Activated CD8-positive, alpha-beta memory T cell treated with anti-CD3 and anti-CD28 coated beads, Interleukin-2, amount 10 ng/mL, durations not matched to agents 7 days and 5 days (primary cell): ENCODE measurements at regions of chr5 and their contacts with region 1.

Region 1: DNA sequence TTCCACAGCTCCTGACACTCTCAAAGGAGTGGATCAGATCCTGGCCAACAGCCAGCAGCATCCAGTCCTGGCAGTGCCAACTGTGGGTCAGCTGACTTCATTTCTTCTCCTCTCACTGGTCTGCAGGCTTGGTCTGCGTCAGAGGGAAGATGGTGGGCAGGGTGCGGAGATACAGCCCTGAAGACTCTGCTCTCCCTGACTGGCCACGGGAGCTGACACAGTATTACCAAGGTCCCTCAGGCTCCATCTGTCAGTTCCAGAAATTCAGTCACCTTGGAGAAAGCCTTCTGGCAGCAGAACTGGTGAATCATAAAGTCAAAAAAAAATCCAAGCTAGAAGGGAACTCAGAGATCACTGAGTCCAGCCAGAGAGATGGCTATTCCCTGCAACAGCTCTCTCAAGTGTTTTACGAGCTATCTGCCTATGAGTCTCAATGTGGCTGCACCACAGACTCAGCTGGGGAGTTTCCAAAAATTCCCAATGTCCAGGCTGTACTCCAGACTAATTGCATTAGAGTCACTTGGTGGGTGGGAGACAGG is 28.0 kb downstream of the C1QTNF2 start:
- DNase-seq: no peak
- ATAC-seq: no peak
- H3K4me3 Mint-ChIP-seq: no peak overlapping the region
- H3K27ac Mint-ChIP-seq: no peak overlapping the region
- H3K4me1 Mint-ChIP-seq: peaks cover 13% of the 10 kb centered on the region
- H3K27me3 Mint-ChIP-seq: peaks cover 2% of the 10 kb centered on the region

Region 2: DNA sequence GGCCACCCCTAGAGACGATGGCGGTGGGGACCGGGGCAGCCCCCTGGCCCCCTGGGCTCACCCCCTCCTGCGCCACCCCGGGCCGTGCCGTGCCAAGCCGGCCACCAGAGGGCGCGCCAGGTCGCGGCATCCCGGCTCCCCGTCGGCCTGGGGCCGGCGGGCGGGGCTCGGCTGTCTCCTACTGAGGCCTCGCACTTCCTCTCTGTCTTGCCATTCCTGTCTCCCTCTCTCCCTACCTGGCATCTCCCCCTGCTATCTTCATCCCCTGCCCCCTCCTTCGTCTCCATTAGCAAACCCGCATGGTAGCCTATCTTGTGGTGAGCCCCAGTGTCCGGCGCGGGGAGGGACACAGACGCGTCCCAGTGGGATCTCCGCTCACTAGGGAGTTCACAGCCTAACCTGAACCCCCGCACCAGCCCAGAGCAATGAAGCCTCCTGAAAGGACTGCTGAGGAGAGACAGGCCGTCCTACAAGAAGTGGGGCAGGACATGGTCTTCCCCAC is 143.0 kb before region 1 on chr5:
- CTCF ChIA-PET with region 1: interaction called, 14 read pairs
- DNase-seq: peak; percentile 71
- ATAC-seq: peak; percentile 99
- H3K4me3 Mint-ChIP-seq: peak overlapping the region; percentile 66
- H3K27ac Mint-ChIP-seq: no peak overlapping the region
- H3K4me1 Mint-ChIP-seq: peaks cover 3% of the 10 kb centered on the region
- H3K27me3 Mint-ChIP-seq: peaks cover 9% of the 10 kb centered on the region

Region 3: DNA sequence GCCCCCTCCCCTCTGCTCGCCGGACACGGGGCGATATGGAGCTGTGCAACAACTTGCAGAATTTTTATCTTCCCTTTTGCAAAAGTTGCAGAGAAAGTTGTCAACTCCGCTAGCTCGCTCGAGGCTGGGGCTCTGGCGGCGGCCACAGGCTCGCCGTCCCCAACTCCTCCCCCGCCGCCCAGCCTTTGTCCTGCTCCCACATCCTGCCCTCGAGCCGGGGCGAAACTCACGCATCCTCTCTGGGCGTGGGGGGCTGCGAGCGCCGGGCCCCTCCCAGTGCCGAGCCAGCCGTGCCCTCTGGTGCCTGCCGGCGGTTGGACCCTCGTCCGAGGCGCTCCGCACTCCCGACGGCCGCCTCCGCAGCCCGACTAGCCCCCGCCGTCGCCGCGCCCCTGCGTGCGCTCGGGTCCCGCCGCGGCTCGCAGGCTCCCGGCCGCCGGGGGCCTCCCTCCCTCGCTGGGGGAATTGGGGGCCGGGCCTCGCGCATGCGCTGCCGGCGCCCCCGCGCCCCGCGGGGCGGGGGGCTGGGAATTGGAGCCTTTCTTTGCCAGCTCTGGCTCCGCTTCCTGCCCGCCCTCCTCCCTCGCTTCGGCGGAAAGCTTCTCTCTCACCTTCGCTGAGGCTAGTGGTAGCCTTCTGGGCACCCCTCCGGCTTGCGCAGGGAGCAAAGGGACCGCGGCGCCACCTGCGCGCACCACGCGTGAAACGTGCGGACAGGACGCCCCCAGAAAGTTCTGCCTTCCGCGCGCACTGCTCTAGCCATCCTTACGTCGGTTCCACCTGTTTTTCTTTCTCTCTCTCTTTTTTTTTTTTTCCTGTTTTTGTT is 30.1 kb before region 1 on chr5 and contains the start of gene CCNJL:
- CTCF ChIA-PET with region 1: no interaction called
- DNase-seq: no peak
- ATAC-seq: peak; percentile 45
- H3K4me3 Mint-ChIP-seq: peak within 1 kb of the TSS; percentile 60
- H3K27ac Mint-ChIP-seq: no peak within 1 kb of the TSS
- H3K4me1 Mint-ChIP-seq: peaks cover 16% of the 10 kb centered on the region
- H3K27me3 Mint-ChIP-seq: peaks cover 85% of the 10 kb centered on the region
- total RNA-seq, gene CCNJL: 0.23 TPM in 1 of 2 experiments, not detected in the other

Region 4: DNA sequence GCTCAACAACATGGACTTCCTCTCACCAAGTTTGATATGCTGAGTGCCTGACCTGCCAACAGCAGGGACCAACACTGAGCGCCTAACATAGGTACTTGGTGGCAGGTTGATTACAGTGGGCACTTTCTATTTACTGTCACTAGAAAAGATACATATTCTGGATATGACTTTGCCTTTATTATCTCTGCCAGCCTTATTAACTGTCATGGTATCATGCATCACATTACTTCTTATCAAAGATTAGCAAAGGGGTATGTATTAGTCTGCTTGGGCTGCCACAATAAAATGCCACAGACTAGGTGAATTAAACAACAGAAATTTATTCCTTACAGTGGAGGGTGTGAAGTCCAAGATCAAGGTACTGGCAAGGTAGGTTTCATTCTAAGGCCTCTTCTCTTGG is 42.2 kb after region 1 on chr5:
- CTCF ChIA-PET with region 1: no interaction called
- DNase-seq: no peak
- ATAC-seq: no peak
- H3K4me3 Mint-ChIP-seq: no peak overlapping the region
- H3K27ac Mint-ChIP-seq: no peak overlapping the region
- H3K4me1 Mint-ChIP-seq: no peaks in the 10 kb centered on the region
- H3K27me3 Mint-ChIP-seq: peaks cover 34% of the 10 kb centered on the region